AG04450 (cell line): ENCODE measurements at regions of chr1 and their contacts with region 1.

Region 1: GRCh38 chr1:35726450-35727433 is 8.1 kb upstream of the C1orf216 start:
- DNase-seq: peak; percentile 45
- H3K4me3 ChIP-seq: no peak overlapping the region
- H3K27ac ChIP-seq: no peak overlapping the region
- H3K27me3 ChIP-seq: no peaks in the 10 kb centered on the region
- CTCF ChIP-seq: peak; percentile 93

Region 2: GRCh38 chr1:35390600-35391494 is 335.9 kb before region 1 on chr1:
- CTCF ChIA-PET with region 1: no interaction called
- POLR2A ChIA-PET with region 1: no interaction called
- DNase-seq: no peak
- H3K4me3 ChIP-seq: no peak overlapping the region
- H3K27ac ChIP-seq: no peak overlapping the region
- H3K27me3 ChIP-seq: no peaks in the 10 kb centered on the region
- CTCF ChIP-seq: no peak

Region 3: GRCh38 chr1:35564037-35564883 is 162.5 kb before region 1 on chr1:
- CTCF ChIA-PET with region 1: interaction called, 248 read pairs
- POLR2A ChIA-PET with region 1: no interaction called
- DNase-seq: no peak
- H3K4me3 ChIP-seq: no peak overlapping the region
- H3K27ac ChIP-seq: peak overlapping the region; percentile 11
- H3K27me3 ChIP-seq: no peaks in the 10 kb centered on the region
- CTCF ChIP-seq: peak; percentile 83

Region 4: GRCh38 chr1:35605882-35606182 is 120.9 kb before region 1 on chr1:
- CTCF ChIA-PET with region 1: interaction called, 11 read pairs
- POLR2A ChIA-PET with region 1: no interaction called
- DNase-seq: no peak
- H3K4me3 ChIP-seq: no peak overlapping the region
- H3K27ac ChIP-seq: peak overlapping the region; percentile 11
- H3K27me3 ChIP-seq: no peaks in the 10 kb centered on the region
- CTCF ChIP-seq: no peak

Region 5: GRCh38 chr1:35715568-35716002 is 11.2 kb before region 1 on chr1:
- CTCF ChIA-PET with region 1: interaction called, 138 read pairs
- POLR2A ChIA-PET with region 1: no interaction called
- DNase-seq: peak; percentile 43
- H3K4me3 ChIP-seq: 0 out of 2 replicates have a peak overlapping the region, but pooled peaks have one; percentile 20
- H3K27ac ChIP-seq: no peak overlapping the region
- H3K27me3 ChIP-seq: no peaks in the 10 kb centered on the region
- CTCF ChIP-seq: peak; percentile 87

Region 6: DNA sequence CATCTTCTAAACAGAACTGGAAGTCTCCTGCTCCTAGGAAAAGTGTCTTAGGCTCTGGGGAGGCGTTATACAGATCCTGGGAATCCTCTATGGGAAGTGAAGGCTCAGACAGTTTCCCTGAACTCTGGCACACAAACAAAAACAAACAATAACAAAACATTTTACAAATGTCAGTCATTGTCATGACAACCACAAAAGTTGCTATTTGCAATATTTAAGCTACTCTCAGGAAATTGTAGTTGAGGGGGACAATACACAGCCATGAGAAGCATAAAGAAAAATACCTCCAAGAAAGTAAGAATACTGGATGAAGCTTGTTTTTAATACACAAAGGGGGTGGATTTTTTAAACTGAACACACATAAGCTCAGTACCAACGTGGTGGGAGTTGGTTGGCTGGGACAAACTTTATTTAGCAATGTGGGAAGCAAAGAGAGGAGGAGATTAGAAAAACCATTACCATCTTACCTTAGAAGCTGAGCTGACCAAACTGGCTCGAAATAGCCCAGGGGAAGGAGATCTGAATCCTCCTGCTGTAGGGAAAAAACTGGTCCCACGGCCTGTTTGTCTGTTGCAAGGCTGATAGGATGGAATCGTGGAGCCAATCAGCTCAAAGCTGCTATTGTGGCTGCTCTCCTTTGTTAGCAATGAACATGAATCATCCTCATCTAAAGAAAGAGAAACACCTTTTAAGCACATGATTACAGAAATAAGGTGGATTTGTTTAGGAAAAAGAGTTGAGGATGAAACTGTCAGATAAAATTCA is 21.4 kb after region 1 on chr1:
- CTCF ChIA-PET with region 1: interaction called, 47 read pairs
- POLR2A ChIA-PET with region 1: interaction called, 3 read pairs
- DNase-seq: no peak
- H3K4me3 ChIP-seq: no peak overlapping the region
- H3K27ac ChIP-seq: no peak overlapping the region
- H3K27me3 ChIP-seq: no peaks in the 10 kb centered on the region
- CTCF ChIP-seq: no peak

Region 7: GRCh38 chr1:35763201-35763600 is 36.5 kb after region 1 on chr1:
- CTCF ChIA-PET with region 1: interaction called, 32 read pairs
- POLR2A ChIA-PET with region 1: no interaction called
- DNase-seq: no peak
- H3K4me3 ChIP-seq: no peak overlapping the region
- H3K27ac ChIP-seq: no peak overlapping the region
- H3K27me3 ChIP-seq: no peaks in the 10 kb centered on the region
- CTCF ChIP-seq: no peak